ENCODE measurements at regions of chr1 and their contacts with region 1.

Region 1: DNA sequence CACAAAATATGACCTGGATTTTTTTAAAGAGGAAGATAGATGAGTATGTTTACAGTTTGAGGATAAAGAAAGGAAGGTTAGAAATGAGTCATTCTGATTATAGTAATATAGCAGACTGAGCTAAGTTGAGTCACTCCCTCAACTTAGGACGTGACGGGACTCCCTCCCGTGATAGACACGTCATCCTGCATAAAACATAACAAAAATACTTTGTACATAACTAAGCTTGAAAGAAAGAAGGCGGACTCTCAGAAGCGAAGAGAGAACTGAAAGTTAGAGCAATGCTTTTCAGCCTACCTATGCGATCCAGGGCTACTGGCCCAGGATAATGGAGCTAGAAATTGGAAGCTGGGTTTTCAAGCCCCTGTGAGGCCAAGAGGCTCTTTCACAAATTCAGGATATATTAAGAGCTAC is 53.0 kb upstream of the DESI2 start:
- DNase-seq: no peak
- H3K4me3 ChIP-seq: no peak overlapping the region
- H3K27ac ChIP-seq: no peak overlapping the region
- H3K4me1 ChIP-seq: no peaks in the 10 kb centered on the region
- H3K27me3 ChIP-seq: peaks cover 0 to 14% (median 0%) of the 10 kb centered on the region in 7 donors
- CTCF ChIP-seq: no peak
- POLR2A ChIP-seq: no peak

Region 2: GRCh38 chr1:244796718-244797406 is 196.9 kb after region 1 on chr1:
- intact Hi-C with region 1: loop called (anchors 2 kb)
- DNase-seq: no peak
- H3K4me3 ChIP-seq: no peak overlapping the region
- H3K27ac ChIP-seq: no peak overlapping the region
- H3K4me1 ChIP-seq: peaks cover 0 to 13% (median 5%) of the 10 kb centered on the region in 6 donors
- H3K27me3 ChIP-seq: peaks cover 0 to 22% (median 0%) of the 10 kb centered on the region in 7 donors
- CTCF ChIP-seq: peak; percentile 78 to 93 (median 89)
- POLR2A ChIP-seq: no peak

Region 3: DNA sequence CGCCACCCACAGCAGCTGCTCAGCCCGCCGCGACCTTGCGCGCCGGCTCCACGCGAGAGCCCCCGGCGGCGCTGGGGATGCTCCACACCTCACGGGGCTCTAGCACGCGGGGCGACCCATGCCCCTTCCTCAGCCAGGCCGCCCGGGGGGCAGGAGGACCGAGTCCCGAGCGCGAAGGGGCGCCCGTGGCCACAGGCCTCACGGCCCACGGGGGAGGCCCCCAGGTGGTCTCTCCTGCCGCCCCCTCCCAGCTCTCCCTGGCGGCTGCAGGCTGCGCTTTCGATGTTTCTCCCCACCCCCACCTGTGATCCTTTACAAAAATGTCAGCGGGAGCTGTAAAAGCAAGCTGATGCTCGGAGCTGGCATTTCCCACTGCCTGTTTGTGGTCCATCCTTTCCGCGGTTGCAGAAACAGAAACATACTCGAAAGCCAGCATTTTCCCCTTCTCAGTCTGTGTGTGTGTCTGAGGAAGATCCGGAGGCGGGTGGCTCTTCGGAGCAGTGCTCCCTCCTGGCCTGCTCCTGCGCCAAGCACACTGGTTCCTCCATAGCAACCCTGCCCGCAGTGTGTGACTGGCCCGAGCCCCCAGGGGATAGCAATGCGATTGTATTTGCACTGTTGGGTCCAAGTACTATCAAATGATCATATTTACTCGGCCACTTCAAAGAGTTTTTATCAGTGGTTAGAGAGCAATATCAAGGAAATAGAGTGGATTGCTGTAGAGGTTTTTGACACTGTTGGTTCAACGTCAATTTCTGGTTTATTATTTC is 557.0 kb after region 1 on chr1:
- intact Hi-C with region 1: no loop called
- DNase-seq: no peak
- H3K4me3 ChIP-seq: peak overlapping the region; percentile 1 to 77 (median 60)
- H3K27ac ChIP-seq: no peak overlapping the region
- H3K4me1 ChIP-seq: peaks cover 29 to 48% (median 44%) of the 10 kb centered on the region in 6 donors
- H3K27me3 ChIP-seq: peaks cover 0 to 76% (median 47%) of the 10 kb centered on the region in 7 donors
- CTCF ChIP-seq: peak in 3 of 11 experiments; percentile 4 to 24 (median 9)
- POLR2A ChIP-seq: no peak

Measured in spleen (tissue), 13 donors.